Activated CD4-positive, alpha-beta T cell treated with anti-CD3 and anti-CD28 coated beads for 36 hours (primary cell): ENCODE measurements at regions of chr2 and their contacts with region 1.

Region 1: GRCh38 chr2:201130524-201131186 is 14.7 kb downstream of the CFLAR start:
- DNase-seq: peak; percentile 62
- ATAC-seq: peak; percentile 48
- H3K4me3 Mint-ChIP-seq: peak overlapping the region; percentile 81
- H3K27ac Mint-ChIP-seq: peak overlapping the region; percentile 95
- H3K4me1 Mint-ChIP-seq: peaks cover 65% of the 10 kb centered on the region
- H3K27me3 Mint-ChIP-seq: no peaks in the 10 kb centered on the region

Region 2: DNA sequence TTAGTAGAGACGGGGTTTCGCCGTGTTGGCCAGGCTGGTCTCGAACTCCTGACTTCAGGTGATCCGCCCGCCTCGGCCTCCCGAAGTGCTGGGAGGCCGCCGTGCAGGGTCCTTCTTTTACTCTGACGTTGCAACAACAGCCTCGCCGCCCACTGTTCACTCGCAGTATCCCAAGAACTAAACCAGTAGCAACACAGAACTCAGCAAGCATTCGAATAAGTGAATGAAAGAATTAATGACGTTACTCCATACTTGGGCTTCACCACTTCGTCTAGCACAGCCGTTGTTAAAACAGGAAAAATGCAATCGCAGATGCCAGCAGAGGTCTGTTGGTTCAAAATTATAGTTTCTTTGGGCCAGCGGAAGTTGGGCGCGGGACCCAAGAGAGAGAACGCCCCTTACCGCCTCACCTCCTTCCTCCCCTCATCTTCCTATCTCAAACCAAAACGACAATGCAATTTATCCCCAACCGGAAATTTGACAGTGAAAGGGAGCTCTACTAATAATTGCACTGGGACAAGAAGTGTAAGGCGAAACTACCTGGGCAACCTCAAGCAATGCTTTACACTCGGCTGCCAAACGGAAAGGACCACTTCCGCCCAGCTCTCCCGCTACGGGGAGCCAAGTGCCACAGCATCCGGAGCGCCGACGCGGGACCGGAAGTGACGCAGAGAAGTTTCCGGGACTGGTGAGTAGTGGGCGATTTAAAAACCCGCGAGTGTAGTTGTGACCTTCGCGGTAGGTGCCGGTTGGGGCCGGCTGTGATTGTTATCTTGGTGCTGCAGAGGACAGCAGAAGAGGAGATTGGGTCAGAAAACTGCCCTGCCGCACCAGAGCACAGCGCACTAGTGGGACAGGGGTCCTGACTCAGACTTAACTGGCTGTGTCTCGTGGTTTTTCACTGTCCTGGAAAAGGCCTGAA is 241.7 kb before region 1 on chr2 and contains the starts of genes NIF3L1 and PPIL3:
- CTCF ChIA-PET with region 1: no interaction called
- POLR2A ChIA-PET with region 1: interaction called, 6 read pairs
- intact Hi-C with region 1: loop called in 1 of 2 experiments (anchors 1 kb)
- DNase-seq: peak; percentile 99
- ATAC-seq: peak; percentile 83
- H3K4me3 Mint-ChIP-seq: peak within 1 kb of the TSS; percentile 98
- H3K27ac Mint-ChIP-seq: peak within 1 kb of the TSS; percentile 100
- H3K4me1 Mint-ChIP-seq: peaks cover 46% of the 10 kb centered on the region
- H3K27me3 Mint-ChIP-seq: no peaks in the 10 kb centered on the region
- total RNA-seq, gene NIF3L1: 37.0 to 47.7 TPM
- total RNA-seq, gene PPIL3: 52.6 to 53.0 TPM

Region 3: GRCh38 chr2:201040867-201041628 is 89.6 kb before region 1 on chr2:
- CTCF ChIA-PET with region 1: no interaction called
- POLR2A ChIA-PET with region 1: no interaction called
- intact Hi-C with region 1: no loop called
- DNase-seq: no peak
- ATAC-seq: no peak
- H3K4me3 Mint-ChIP-seq: no peak overlapping the region
- H3K27ac Mint-ChIP-seq: no peak overlapping the region
- H3K4me1 Mint-ChIP-seq: peaks cover 4% of the 10 kb centered on the region
- H3K27me3 Mint-ChIP-seq: no peaks in the 10 kb centered on the region

Region 4: DNA sequence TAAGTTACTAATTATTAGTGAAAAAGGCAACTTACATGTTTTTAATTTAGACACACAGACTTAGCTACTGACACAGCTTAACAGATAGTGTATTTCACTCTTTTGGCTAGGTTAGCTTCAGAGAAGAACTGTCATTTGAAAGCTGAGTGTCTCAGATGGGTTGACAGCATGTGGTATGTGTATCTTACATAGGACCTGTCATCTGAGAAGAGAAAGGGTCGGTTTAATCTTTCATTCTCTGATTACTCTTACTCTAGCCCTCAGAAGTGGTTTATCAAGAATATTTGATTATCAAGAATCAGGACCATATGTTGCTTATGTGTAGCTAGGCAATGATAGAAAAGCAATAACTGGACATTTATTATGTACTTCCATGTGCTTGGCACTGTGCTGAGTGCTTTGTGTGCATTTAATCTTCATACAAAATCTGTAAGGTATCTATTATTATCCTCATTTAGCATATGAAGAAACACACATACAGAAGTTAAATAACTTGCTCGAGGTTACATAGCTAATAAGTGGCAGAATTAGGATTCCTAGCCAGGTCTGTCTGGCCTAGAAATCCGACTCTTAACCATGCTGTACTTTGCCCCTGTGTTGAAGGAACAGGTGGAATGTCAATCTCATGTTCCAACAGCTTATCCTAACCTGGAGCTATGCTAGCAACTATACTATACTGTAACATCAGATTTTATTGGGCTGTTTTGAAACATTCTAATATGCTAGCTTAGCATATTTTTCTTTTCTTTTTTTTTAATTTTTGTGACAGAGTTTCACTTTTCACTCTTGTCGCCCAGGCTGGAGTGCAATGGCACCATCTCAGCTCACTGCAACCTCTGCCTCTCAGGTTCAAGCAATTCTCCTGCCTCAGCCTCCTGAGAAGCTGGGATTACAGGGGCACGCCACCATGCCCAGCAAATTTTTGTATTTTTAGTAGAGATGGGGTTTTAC is 13.7 kb after region 1 on chr2:
- CTCF ChIA-PET with region 1: interaction called, 14 read pairs
- POLR2A ChIA-PET with region 1: interaction called, 4 read pairs
- intact Hi-C with region 1: loop called in 1 of 2 experiments (anchors 2 kb)
- DNase-seq: no peak
- ATAC-seq: no peak
- H3K4me3 Mint-ChIP-seq: no peak overlapping the region
- H3K27ac Mint-ChIP-seq: no peak overlapping the region
- H3K4me1 Mint-ChIP-seq: peaks cover 22% of the 10 kb centered on the region
- H3K27me3 Mint-ChIP-seq: no peaks in the 10 kb centered on the region

Region 5: GRCh38 chr2:201158111-201158929 is 27.7 kb after region 1 on chr2:
- CTCF ChIA-PET with region 1: interaction called, 12 read pairs
- POLR2A ChIA-PET with region 1: interaction called, 3 read pairs
- intact Hi-C with region 1: no loop called
- DNase-seq: peak; percentile 59
- ATAC-seq: peak; percentile 66
- H3K4me3 Mint-ChIP-seq: no peak overlapping the region
- H3K27ac Mint-ChIP-seq: peak overlapping the region; percentile 64
- H3K4me1 Mint-ChIP-seq: peaks cover 23% of the 10 kb centered on the region
- H3K27me3 Mint-ChIP-seq: no peaks in the 10 kb centered on the region

Region 6: DNA sequence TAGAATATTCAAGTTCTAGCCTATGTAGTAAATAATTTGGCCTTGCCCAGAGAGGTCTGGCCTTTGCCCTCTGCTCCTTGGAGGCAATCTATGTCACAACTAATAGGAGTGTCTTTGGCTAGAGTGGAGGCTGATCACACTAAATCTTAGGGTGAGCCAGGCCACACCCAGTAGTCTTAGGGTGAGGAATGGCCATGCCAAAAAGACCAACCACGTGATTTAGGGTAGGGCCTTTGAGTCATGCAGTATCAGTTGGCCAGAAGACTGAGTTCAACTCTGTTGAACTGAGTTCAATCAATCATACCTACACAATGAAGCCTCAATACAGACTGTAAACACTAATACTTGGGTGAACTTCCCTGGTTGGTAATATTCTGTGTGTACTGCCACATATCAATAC is 252.5 kb after region 1 on chr2:
- CTCF ChIA-PET with region 1: no interaction called
- POLR2A ChIA-PET with region 1: no interaction called
- intact Hi-C with region 1: no loop called
- DNase-seq: no peak
- ATAC-seq: no peak
- H3K4me3 Mint-ChIP-seq: no peak overlapping the region
- H3K27ac Mint-ChIP-seq: no peak overlapping the region
- H3K4me1 Mint-ChIP-seq: no peaks in the 10 kb centered on the region
- H3K27me3 Mint-ChIP-seq: no peaks in the 10 kb centered on the region

Region 7: GRCh38 chr2:201642579-201643215 is 512.0 kb after region 1 on chr2:
- CTCF ChIA-PET with region 1: no interaction called
- POLR2A ChIA-PET with region 1: no interaction called
- intact Hi-C with region 1: loop called in 1 of 2 experiments (anchors 5 kb)
- DNase-seq: peak; percentile 91
- ATAC-seq: peak; percentile 82
- H3K4me3 Mint-ChIP-seq: peak overlapping the region; percentile 79
- H3K27ac Mint-ChIP-seq: peak overlapping the region; percentile 84
- H3K4me1 Mint-ChIP-seq: peaks cover 9% of the 10 kb centered on the region
- H3K27me3 Mint-ChIP-seq: no peaks in the 10 kb centered on the region